OCI-LY7 (cell line): ENCODE measurements at regions of chr5 and their contacts with region 1.

Region 1: DNA sequence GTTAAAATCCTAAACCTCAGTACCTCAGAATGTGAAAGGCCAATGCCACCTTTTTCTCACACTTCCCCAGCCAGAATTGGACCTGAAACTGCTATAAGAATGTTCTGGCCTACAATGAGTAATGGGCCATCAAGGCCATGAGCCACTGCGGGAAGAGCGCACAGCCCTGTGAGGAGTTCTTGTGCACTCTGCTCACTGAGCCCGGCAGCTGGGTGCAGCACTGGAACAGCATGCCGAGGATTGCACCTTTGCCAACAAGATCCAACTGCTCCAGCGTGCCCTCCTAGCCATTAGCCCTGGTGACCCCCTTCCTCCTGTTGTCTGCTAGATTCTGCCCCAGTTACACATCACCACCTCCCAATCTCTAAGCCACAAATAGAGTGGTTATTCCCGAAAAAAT is 758.1 kb downstream of the PRELID2 start:
- DNase-seq: no peak
- H3K4me3 ChIP-seq: no peak overlapping the region
- H3K27ac ChIP-seq: no peak overlapping the region
- H3K4me1 ChIP-seq: no peaks in the 10 kb centered on the region
- CTCF ChIP-seq: no peak

Region 2: GRCh38 chr5:144356489-144356888 is 720.5 kb before region 1 on chr5:
- CTCF ChIA-PET with region 1: no interaction called
- POLR2A ChIA-PET with region 1: no interaction called
- intact Hi-C with region 1: no loop called
- DNase-seq: no peak
- H3K4me3 ChIP-seq: no peak overlapping the region
- H3K27ac ChIP-seq: no peak overlapping the region
- H3K4me1 ChIP-seq: no peaks in the 10 kb centered on the region
- CTCF ChIP-seq: no peak

Region 3: GRCh38 chr5:145124806-145125205 is 47.8 kb after region 1 on chr5:
- CTCF ChIA-PET with region 1: no interaction called
- POLR2A ChIA-PET with region 1: no interaction called
- intact Hi-C with region 1: no loop called
- DNase-seq: no peak
- H3K4me3 ChIP-seq: no peak overlapping the region
- H3K27ac ChIP-seq: no peak overlapping the region
- H3K4me1 ChIP-seq: no peaks in the 10 kb centered on the region
- CTCF ChIP-seq: no peak

Region 4: GRCh38 chr5:145568581-145568980 is 491.6 kb after region 1 on chr5:
- CTCF ChIA-PET with region 1: no interaction called
- POLR2A ChIA-PET with region 1: no interaction called
- intact Hi-C with region 1: loop called (anchors 5 kb)
- DNase-seq: no peak
- H3K4me3 ChIP-seq: no peak overlapping the region
- H3K27ac ChIP-seq: no peak overlapping the region
- H3K4me1 ChIP-seq: no peaks in the 10 kb centered on the region
- CTCF ChIP-seq: no peak